ENCODE measurements at regions of chr3 and their contacts with region 1.

Region 1: GRCh38 chr3:100463002-100463401 is 29.4 kb upstream of the TMEM45A start:
- DNase-seq: peak; percentile 14
- H3K4me3 Mint-ChIP-seq: no peak overlapping the region
- H3K27ac Mint-ChIP-seq: no peak overlapping the region
- H3K4me1 Mint-ChIP-seq: peaks cover 7% of the 10 kb centered on the region
- H3K27me3 Mint-ChIP-seq: no peaks in the 10 kb centered on the region

Region 2: GRCh38 chr3:100316641-100317069 is 146.3 kb before region 1 on chr3:
- CTCF ChIA-PET with region 1: interaction called, 6 read pairs
- POLR2A ChIA-PET with region 1: interaction called, 3 read pairs
- intact Hi-C with region 1: loop called (anchors 1 kb)
- DNase-seq: peak; percentile 36
- H3K4me3 Mint-ChIP-seq: no peak overlapping the region
- H3K27ac Mint-ChIP-seq: no peak overlapping the region
- H3K4me1 Mint-ChIP-seq: peaks cover 8% of the 10 kb centered on the region
- H3K27me3 Mint-ChIP-seq: no peaks in the 10 kb centered on the region

Region 3: GRCh38 chr3:100334488-100335351 is 128.3 kb before region 1 on chr3 and contains the start of gene NIT2:
- CTCF ChIA-PET with region 1: no interaction called
- POLR2A ChIA-PET with region 1: no interaction called
- intact Hi-C with region 1: no loop called
- DNase-seq: peak; percentile 87
- H3K4me3 Mint-ChIP-seq: peak within 1 kb of the TSS; percentile 86
- H3K27ac Mint-ChIP-seq: peak within 1 kb of the TSS; percentile 84
- H3K4me1 Mint-ChIP-seq: peaks cover 21% of the 10 kb centered on the region
- H3K27me3 Mint-ChIP-seq: no peaks in the 10 kb centered on the region
- total RNA-seq, gene NIT2: 65.3 to 65.7 TPM

Region 4: DNA sequence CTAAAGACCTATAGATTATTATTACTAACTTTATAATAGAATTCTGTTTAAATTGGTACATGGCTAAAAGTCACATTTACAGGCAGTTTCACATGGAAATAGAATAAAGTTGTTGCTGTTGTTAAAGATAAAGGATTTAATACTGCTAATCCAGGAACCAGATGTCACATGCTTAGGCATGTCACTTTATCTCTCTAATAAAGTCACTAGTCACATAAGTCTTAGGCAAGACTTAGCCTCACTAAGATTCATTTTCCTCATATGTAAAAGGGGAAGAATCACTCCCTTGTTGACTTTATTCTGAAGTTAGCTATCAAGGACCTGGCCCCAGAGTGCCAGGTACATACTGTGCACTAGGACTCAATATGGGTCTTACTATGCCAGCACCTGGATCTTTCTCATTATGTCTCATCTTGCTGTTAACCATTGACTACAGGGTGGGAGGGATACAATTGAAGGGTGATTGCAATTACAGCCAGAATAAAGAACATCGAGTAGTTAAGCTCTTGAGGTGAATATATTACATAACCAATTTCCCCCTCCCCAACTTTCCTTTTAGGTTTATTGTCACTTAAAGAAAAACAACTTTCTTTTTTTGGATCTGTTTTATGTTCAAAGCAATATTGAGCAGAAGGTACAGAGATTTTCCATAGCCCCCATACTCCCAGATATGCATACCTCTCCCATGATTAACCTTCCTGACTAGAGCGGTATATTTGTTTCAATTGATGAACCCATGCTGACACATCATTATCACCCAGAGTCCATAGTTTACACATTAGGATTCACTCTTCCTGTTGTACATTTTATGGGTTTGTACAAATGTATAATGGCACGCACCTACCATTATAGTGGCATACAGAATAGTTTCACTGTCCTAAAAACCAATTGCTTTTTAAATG is 25.0 kb before region 1 on chr3:
- CTCF ChIA-PET with region 1: interaction called, 10 read pairs
- POLR2A ChIA-PET with region 1: no interaction called
- intact Hi-C with region 1: no loop called
- DNase-seq: no peak
- H3K4me3 Mint-ChIP-seq: no peak overlapping the region
- H3K27ac Mint-ChIP-seq: no peak overlapping the region
- H3K4me1 Mint-ChIP-seq: peaks cover 8% of the 10 kb centered on the region
- H3K27me3 Mint-ChIP-seq: no peaks in the 10 kb centered on the region

Region 5: DNA sequence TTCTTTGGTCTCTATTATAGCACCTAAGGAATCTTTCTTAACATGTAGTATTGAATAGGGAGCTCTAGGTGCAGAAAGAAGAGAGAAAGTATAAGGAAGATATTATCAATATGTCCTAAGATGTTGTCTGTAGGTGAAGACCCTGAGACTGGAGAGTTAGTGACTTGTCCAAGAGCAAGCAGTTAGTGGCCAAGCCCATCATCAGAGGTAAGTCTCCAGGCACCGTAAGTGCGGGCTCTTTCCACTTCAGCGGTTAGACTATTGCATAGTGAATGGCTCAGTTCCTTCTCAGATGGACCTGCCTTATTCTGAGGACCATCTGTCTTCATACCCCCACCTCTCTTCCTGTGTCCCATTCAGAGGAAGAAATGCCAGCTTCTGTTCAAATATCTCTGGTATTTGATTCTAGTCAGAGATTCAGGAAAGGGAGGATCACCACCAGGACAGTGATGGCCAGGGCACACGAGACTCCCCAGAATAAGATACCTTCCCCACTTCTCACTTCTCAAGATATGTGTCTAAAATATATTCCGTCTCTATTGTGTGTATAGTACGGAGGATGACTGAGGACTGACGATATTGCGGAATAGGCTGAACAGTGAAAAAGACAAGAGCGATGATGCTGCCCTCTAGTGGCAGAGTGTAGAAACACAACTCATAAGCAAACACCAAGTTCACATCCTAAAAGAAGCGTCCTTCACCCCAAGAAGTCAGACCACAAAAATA is 127.3 kb after region 1 on chr3:
- CTCF ChIA-PET with region 1: interaction called, 113 read pairs
- POLR2A ChIA-PET with region 1: no interaction called
- intact Hi-C with region 1: loop called (anchors 1 kb)
- DNase-seq: peak; percentile 66
- H3K4me3 Mint-ChIP-seq: no peak overlapping the region
- H3K27ac Mint-ChIP-seq: no peak overlapping the region
- H3K4me1 Mint-ChIP-seq: peaks cover 6% of the 10 kb centered on the region
- H3K27me3 Mint-ChIP-seq: peaks cover 4% of the 10 kb centered on the region

Region 6: DNA sequence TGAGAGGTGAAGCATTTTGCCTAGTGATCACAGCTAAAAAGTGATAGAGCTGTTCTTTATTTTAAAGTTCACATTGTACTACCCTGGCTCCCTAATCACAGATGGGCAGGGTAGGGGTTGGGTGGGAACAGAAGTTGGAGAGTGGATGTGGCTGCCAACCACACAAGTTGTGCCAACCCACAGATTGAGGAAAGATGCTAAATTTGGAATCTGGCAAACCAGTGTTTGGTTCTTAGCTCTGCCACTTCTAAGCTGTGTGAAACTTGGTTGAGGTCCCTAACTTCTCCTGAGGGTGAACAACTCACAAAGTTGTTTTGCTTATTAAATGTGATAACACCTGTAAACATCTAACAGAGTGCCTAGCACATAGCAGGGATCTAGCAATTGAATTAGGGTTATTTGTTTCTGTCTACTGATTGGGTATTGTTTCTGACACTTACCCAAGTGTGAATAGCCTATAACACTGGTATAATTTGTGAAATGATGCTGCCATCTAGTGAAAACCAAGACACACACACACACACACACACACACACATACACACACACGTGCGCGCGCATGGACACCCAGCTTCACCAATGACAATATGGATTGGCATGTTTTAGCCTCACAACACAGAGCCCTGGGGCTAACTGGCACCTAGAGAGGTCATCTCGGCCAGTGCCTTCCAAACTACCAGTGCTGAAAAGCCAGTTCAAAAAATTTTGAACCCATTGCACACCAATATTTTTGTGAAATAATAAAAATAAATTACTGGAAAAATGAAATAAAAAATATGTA is 171.7 kb after region 1 on chr3:
- CTCF ChIA-PET with region 1: interaction called, 4 read pairs
- POLR2A ChIA-PET with region 1: no interaction called
- intact Hi-C with region 1: loop called (anchors 5 kb)
- DNase-seq: peak; percentile 39
- H3K4me3 Mint-ChIP-seq: no peak overlapping the region
- H3K27ac Mint-ChIP-seq: no peak overlapping the region
- H3K4me1 Mint-ChIP-seq: no peaks in the 10 kb centered on the region
- H3K27me3 Mint-ChIP-seq: peaks cover 11% of the 10 kb centered on the region

Region 7: DNA sequence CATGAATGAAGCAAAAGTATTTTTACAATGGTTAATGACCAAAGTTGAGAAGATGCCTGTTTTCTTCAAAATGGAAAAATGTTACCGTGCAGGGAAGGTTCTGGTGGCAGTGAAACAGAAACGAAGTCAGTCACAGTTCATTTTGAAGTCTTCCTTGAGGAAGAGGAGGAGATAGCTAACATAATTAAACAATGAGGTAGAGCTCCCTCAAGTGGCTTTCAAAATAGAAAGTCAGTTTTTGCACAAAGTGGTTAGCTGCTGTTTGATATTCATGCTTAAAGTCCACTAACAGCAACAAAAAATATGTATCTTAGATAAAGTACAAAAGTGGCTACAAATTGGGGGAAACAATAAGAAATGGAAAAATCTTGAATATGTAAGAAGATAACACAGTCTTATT is 333.6 kb after region 1 on chr3:
- CTCF ChIA-PET with region 1: interaction called, 11 read pairs
- POLR2A ChIA-PET with region 1: no interaction called
- intact Hi-C with region 1: loop called (anchors 1 kb)
- DNase-seq: no peak
- H3K4me3 Mint-ChIP-seq: no peak overlapping the region
- H3K27ac Mint-ChIP-seq: no peak overlapping the region
- H3K4me1 Mint-ChIP-seq: peaks cover 4% of the 10 kb centered on the region
- H3K27me3 Mint-ChIP-seq: no peaks in the 10 kb centered on the region